ENCODE measurements at regions of chr10 and their contacts with region 1.

Region 1: GRCh38 chr10:14837757-14838581 is at the starts of genes CDNF, HSPA14 and MSANTD7:
- DNase-seq: peak; percentile 98 to 100 (median 99)
- ATAC-seq: peak; percentile 95
- H3K4me3 ChIP-seq: peak within 1 kb of the TSS; percentile 90 to 96
- H3K4me3 Mint-ChIP-seq: peak within 1 kb of the TSS; percentile 98
- H3K27ac ChIP-seq: peak within 1 kb of the TSS; percentile 86 to 94
- H3K27ac Mint-ChIP-seq: peak within 1 kb of the TSS; percentile 99
- H3K4me1 ChIP-seq: peaks cover 17% of the 10 kb centered on the region
- H3K4me1 Mint-ChIP-seq: peaks cover 32% of the 10 kb centered on the region
- H3K27me3 ChIP-seq: no peaks in the 10 kb centered on the region
- H3K27me3 Mint-ChIP-seq: no peaks in the 10 kb centered on the region
- CTCF ChIP-seq: no peak
- total RNA-seq, gene CDNF: 2.3 to 2.5 TPM
- total RNA-seq, gene HSPA14: 37.7 to 37.8 TPM
- total RNA-seq, gene MSANTD7: 20.2 to 22.3 TPM

Region 2: DNA sequence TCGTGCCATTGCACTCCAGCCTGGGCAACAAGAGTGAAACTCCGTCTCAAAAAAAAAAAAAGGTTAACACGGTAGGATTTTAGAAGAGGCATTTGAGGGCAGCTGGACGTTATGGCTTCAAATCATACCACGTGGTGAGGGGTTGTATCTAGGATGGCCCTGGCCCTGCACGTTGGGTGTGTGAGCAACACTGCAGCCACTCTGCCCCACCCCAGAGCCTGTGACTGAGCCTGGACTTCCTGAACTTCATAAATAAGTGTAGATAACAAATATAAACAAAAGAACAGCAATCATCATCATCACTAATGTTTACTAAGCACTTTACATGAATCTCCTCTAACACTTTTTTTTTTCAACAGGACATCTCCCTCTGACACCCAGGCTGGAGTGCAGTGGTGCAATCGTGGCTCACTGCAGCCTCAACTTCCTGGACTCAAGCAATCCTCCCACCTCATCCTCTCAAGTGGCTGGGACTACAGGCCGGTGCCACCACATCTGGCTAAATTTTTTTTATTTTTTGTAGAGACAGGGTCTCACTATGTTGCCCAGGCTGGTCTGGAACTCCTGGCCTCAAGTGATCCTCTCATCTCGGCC is 337.7 kb before region 1 on chr10:
- CTCF ChIA-PET with region 1: interaction called, 16 read pairs
- POLR2A ChIA-PET with region 1: interaction called, 4 read pairs
- intact Hi-C with region 1: loop called (anchors 5 kb)
- DNase-seq: no peak
- ATAC-seq: no peak
- H3K4me3 ChIP-seq: no peak overlapping the region
- H3K4me3 Mint-ChIP-seq: no peak overlapping the region
- H3K27ac ChIP-seq: no peak overlapping the region
- H3K27ac Mint-ChIP-seq: no peak overlapping the region
- H3K4me1 ChIP-seq: peaks cover 9% of the 10 kb centered on the region
- H3K4me1 Mint-ChIP-seq: peaks cover 6% of the 10 kb centered on the region
- H3K27me3 ChIP-seq: no peaks in the 10 kb centered on the region
- H3K27me3 Mint-ChIP-seq: no peaks in the 10 kb centered on the region
- CTCF ChIP-seq: no peak

Region 3: DNA sequence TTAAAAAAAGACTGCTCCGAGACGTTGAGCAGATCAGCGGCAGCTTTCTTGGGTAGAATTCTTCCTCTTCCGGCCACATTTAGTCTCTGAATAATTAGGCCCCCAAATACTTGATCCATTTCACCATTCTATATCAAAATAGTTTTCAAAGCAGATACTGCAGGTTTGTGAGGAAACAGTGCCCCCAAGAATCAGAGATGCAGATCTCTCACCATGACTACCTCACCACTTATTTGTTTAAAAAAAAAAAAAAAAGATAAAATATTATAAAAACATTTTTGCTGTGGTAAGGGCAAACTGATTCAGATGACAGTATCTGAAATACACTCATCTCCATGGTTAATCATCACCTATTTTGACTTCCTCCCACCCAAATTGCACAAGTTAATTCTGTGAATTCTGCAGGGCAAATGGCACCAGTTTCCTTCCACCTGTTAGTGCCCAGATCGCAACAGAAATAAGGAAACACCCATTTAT is 273.7 kb before region 1 on chr10:
- CTCF ChIA-PET with region 1: interaction called, 5 read pairs
- POLR2A ChIA-PET with region 1: interaction called, 10 read pairs
- intact Hi-C with region 1: loop called (anchors 2 to 5 kb)
- DNase-seq: peak in 3 of 9 experiments; percentile 45 to 85 (median 75)
- ATAC-seq: peak; percentile 57
- H3K4me3 ChIP-seq: peak overlapping the region in 1 of 2 experiments; percentile 21
- H3K4me3 Mint-ChIP-seq: peak overlapping the region; percentile 80
- H3K27ac ChIP-seq: peak overlapping the region; percentile 77 to 79
- H3K27ac Mint-ChIP-seq: peak overlapping the region; percentile 98
- H3K4me1 ChIP-seq: peaks cover 90% of the 10 kb centered on the region
- H3K4me1 Mint-ChIP-seq: peaks cover 88% of the 10 kb centered on the region
- H3K27me3 ChIP-seq: no peaks in the 10 kb centered on the region
- H3K27me3 Mint-ChIP-seq: no peaks in the 10 kb centered on the region
- CTCF ChIP-seq: no peak

Region 4: DNA sequence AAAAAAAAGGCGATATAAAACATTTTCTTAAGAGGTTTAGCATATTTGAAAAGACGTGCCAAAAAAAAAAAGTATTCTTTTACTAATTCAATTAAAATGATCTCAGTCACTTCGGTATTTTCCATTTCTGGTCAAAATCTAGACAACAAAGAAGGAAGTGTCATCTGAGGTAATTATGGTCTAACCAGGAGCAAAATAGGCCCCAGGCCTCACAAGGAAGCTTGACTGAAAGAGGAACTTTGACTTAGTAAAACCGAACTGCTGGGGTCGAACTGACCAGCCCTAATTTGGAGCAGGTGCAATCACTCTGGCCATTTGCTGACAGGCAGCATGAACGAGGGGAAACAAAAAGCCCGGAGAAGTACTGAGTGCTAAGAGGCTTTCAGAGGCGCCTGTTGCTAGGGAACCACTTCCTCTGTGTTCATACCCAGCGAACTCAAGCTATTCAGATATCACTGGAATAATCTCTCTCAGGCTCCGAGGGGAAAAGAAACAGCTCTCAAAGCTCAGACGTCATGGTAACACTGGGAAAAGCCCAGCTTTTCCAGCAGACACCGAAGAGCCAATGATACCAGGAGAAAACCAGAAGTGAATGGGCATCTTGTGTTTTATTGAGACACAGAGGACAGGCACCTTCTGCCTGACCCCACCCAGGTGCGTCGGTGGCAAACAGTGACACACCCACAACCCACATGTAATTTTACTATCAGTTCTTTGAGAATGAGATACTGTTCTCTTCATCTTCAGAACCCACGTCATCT is 189.8 kb before region 1 on chr10:
- CTCF ChIA-PET with region 1: interaction called, 3 read pairs
- POLR2A ChIA-PET with region 1: interaction called, 9 read pairs
- intact Hi-C with region 1: loop called in 1 of 2 experiments (anchors 2 kb)
- DNase-seq: peak; percentile 52 to 92 (median 74)
- ATAC-seq: peak; percentile 86
- H3K4me3 ChIP-seq: peak overlapping the region; percentile 41 to 50
- H3K4me3 Mint-ChIP-seq: peak overlapping the region; percentile 86
- H3K27ac ChIP-seq: peak overlapping the region; percentile 89 to 94
- H3K27ac Mint-ChIP-seq: peak overlapping the region; percentile 99
- H3K4me1 ChIP-seq: peaks cover 26% of the 10 kb centered on the region
- H3K4me1 Mint-ChIP-seq: peaks cover 48% of the 10 kb centered on the region
- H3K27me3 ChIP-seq: no peaks in the 10 kb centered on the region
- H3K27me3 Mint-ChIP-seq: no peaks in the 10 kb centered on the region
- CTCF ChIP-seq: no peak

Region 5: GRCh38 chr10:14911801-14912200 is 73.8 kb after region 1 on chr10:
- CTCF ChIA-PET with region 1: no interaction called
- POLR2A ChIA-PET with region 1: no interaction called
- intact Hi-C with region 1: no loop called
- DNase-seq: no peak
- ATAC-seq: no peak
- H3K4me3 ChIP-seq: no peak overlapping the region
- H3K4me3 Mint-ChIP-seq: no peak overlapping the region
- H3K27ac ChIP-seq: no peak overlapping the region
- H3K27ac Mint-ChIP-seq: no peak overlapping the region
- H3K4me1 ChIP-seq: no peaks in the 10 kb centered on the region
- H3K4me1 Mint-ChIP-seq: peaks cover 14% of the 10 kb centered on the region
- H3K27me3 ChIP-seq: no peaks in the 10 kb centered on the region
- H3K27me3 Mint-ChIP-seq: no peaks in the 10 kb centered on the region
- CTCF ChIP-seq: no peak

Region 6: GRCh38 chr10:15097011-15097812 is 259.2 kb after region 1 on chr10 and contains the start of gene RPP38:
- CTCF ChIA-PET with region 1: no interaction called
- POLR2A ChIA-PET with region 1: interaction called, 3 read pairs
- intact Hi-C with region 1: loop called in 1 of 2 experiments (anchors 2 kb)
- DNase-seq: peak; percentile 85 to 98 (median 95)
- ATAC-seq: peak; percentile 83
- H3K4me3 ChIP-seq: peak within 1 kb of the TSS; percentile 74 to 88
- H3K4me3 Mint-ChIP-seq: peak within 1 kb of the TSS; percentile 97
- H3K27ac ChIP-seq: peak within 1 kb of the TSS; percentile 92 to 96
- H3K27ac Mint-ChIP-seq: peak within 1 kb of the TSS; percentile 97
- H3K4me1 ChIP-seq: peaks cover 28% of the 10 kb centered on the region
- H3K4me1 Mint-ChIP-seq: peaks cover 35% of the 10 kb centered on the region
- H3K27me3 ChIP-seq: no peaks in the 10 kb centered on the region
- H3K27me3 Mint-ChIP-seq: no peaks in the 10 kb centered on the region
- CTCF ChIP-seq: no peak
- total RNA-seq, gene RPP38: 10.6 to 12.3 TPM